CD4-positive, alpha-beta memory T cell (primary cell): ENCODE measurements at regions of chr12 and their contacts with region 1.

Region 1: DNA sequence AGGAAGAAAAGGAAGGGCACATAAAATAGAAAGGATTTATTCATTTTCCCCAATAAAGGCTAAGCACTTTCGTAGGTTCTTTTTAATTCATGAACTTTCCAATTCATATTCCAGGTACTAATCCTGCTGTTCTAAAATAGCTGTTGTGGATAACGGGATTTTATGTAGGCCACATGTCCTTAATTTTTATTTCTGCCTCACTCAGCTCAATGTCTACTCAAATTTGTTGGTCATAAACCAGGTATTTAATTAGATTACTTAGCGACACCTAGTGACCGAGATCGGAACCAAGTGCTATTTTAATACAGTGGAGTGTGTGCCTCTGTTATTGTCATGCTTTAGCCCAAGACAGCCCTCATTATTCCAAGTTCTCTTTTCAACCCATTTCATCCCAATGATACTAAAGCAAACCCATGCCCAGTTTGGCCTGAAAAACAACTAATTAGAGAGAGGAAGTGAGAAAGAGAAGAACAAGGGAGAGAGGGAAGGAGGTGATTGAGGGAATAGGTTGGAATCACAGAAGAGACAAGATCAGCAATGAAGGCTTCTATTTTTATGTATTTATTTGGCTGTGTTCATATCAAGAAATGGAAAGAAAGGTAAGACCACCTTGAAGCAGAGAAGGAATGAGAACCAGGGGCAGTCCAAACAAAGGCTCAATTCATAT is 45.9 kb upstream of the IFNG-AS1 start:
- DNase-seq: peak; percentile 62 to 71 (median 65)
- H3K4me3 ChIP-seq: no peak overlapping the region
- H3K4me3 Mint-ChIP-seq: no peak overlapping the region
- H3K27ac ChIP-seq: no peak overlapping the region
- H3K27ac Mint-ChIP-seq: peak overlapping the region in 1 of 7 donors; percentile 37
- H3K4me1 ChIP-seq: no peaks in the 10 kb centered on the region
- H3K4me1 Mint-ChIP-seq: peaks cover 3 to 5% (median 4%) of the 10 kb centered on the region in 4 donors
- H3K27me3 ChIP-seq: no peaks in the 10 kb centered on the region
- H3K27me3 Mint-ChIP-seq: peaks cover 1 to 2% of the 10 kb centered on the region in 2 donors

Region 2: GRCh38 chr12:67441736-67442346 is 501.5 kb before region 1 on chr12:
- CTCF ChIA-PET with region 1: interaction called, 8 read pairs
- POLR2A ChIA-PET with region 1: no interaction called
- intact Hi-C with region 1: loop called (anchors 1 kb)
- DNase-seq: peak; percentile 68 to 79 (median 68)
- H3K4me3 ChIP-seq: no peak overlapping the region
- H3K4me3 Mint-ChIP-seq: peak overlapping the region; percentile 43 to 72 (median 68)
- H3K27ac ChIP-seq: no peak overlapping the region
- H3K27ac Mint-ChIP-seq: peak overlapping the region in 6 of 7 donors; percentile 10 to 86 (median 82)
- H3K4me1 ChIP-seq: peaks cover 12% of the 10 kb centered on the region
- H3K4me1 Mint-ChIP-seq: peaks cover 21 to 35% (median 27%) of the 10 kb centered on the region in 4 donors
- H3K27me3 ChIP-seq: no peaks in the 10 kb centered on the region
- H3K27me3 Mint-ChIP-seq: no peaks in the 10 kb centered on the region

Region 3: GRCh38 chr12:67661311-67662021 is 281.9 kb before region 1 on chr12:
- CTCF ChIA-PET with region 1: interaction called, 11 read pairs
- POLR2A ChIA-PET with region 1: interaction called, 3 read pairs
- intact Hi-C with region 1: no loop called
- DNase-seq: no peak
- H3K4me3 ChIP-seq: no peak overlapping the region
- H3K4me3 Mint-ChIP-seq: peak overlapping the region in 5 of 8 donors; percentile 7 to 61 (median 31)
- H3K27ac ChIP-seq: no peak overlapping the region
- H3K27ac Mint-ChIP-seq: peak overlapping the region in 4 of 7 donors; percentile 16 to 64 (median 40)
- H3K4me1 ChIP-seq: peaks cover 94% of the 10 kb centered on the region
- H3K4me1 Mint-ChIP-seq: peaks cover 61 to 90% (median 81%) of the 10 kb centered on the region in 4 donors
- H3K27me3 ChIP-seq: no peaks in the 10 kb centered on the region
- H3K27me3 Mint-ChIP-seq: no peaks in the 10 kb centered on the region

Region 4: DNA sequence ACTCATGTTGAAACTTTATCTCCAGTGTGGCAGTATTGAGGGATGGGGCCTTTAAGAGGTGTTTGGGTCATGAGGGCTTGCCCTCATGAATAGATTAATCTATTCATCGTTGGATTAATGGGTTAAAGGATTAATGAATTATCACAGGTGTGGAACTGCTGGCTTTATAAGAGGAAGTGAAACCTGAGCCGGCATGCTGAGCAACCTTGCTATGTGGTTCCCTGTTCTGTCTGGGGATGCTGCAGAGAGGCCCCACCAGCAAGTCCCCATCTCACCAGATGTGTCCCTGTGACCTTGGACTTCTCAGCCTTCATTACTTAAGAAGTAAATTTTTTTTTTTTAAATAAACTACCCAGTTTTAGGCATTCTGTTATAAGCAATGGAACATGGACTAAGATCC is 185.2 kb before region 1 on chr12:
- CTCF ChIA-PET with region 1: no interaction called
- POLR2A ChIA-PET with region 1: no interaction called
- intact Hi-C with region 1: no loop called
- DNase-seq: no peak
- H3K4me3 ChIP-seq: no peak overlapping the region
- H3K4me3 Mint-ChIP-seq: no peak overlapping the region
- H3K27ac ChIP-seq: no peak overlapping the region
- H3K27ac Mint-ChIP-seq: no peak overlapping the region
- H3K4me1 ChIP-seq: no peaks in the 10 kb centered on the region
- H3K4me1 Mint-ChIP-seq: peaks cover 0 to 5% (median 2%) of the 10 kb centered on the region in 4 donors
- H3K27me3 ChIP-seq: no peaks in the 10 kb centered on the region
- H3K27me3 Mint-ChIP-seq: peaks cover 1 to 2% of the 10 kb centered on the region in 2 donors

Region 5: GRCh38 chr12:67804168-67804567 is 139.2 kb before region 1 on chr12:
- CTCF ChIA-PET with region 1: interaction called, 3 read pairs
- POLR2A ChIA-PET with region 1: no interaction called
- intact Hi-C with region 1: loop called (anchors 5 kb)
- DNase-seq: peak; percentile 52 to 80 (median 61)
- H3K4me3 ChIP-seq: no peak overlapping the region
- H3K4me3 Mint-ChIP-seq: no peak overlapping the region
- H3K27ac ChIP-seq: no peak overlapping the region
- H3K27ac Mint-ChIP-seq: no peak overlapping the region
- H3K4me1 ChIP-seq: peaks cover 31% of the 10 kb centered on the region
- H3K4me1 Mint-ChIP-seq: peaks cover 5 to 14% (median 8%) of the 10 kb centered on the region in 4 donors
- H3K27me3 ChIP-seq: no peaks in the 10 kb centered on the region
- H3K27me3 Mint-ChIP-seq: no peaks in the 10 kb centered on the region